Dorsolateral prefrontal cortex (tissue), 120 donors: ENCODE measurements at regions of chr20 and their contacts with region 1.

Region 1: DNA sequence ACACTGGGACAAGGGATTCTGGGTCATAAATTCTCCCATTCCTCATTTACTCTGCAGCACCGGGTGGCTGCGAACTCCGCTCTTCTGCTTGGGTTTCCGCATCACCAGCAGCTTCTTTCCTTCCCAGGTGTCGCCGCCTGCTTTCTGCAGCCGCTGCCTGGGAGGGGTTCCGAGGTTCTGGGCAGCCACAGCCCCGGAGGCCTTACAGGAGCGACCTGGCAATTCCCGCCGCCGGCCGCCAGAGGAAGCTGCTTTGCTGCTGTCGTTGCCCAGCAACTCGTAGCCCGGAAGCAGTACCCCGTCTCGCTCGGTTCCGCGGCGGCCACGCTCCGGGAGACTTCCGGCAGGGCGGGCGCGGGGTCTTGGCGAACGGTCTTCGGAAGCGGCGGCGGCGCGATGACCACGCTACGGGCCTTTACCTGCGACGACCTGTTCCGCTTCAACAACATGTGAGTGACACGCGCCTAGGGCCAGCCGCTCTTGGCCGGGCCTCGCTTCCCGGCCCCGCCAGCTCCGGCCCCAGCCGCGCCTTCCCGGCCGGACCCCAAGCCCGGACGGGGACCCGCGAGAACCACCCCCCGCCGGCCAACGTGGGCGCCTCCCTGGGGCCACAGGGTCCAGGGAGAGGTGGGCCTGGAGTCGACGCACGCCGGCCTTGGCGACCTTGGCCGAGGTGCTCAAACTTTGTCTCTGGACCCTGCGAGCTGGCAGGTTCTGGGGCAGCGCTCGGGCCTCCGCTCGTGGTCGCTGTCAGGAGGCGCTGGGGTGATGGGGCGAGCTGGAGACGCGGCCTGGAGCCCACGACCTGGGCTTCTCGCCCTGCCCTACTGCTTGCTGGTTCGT is at the start of gene NAA20:
- DNase-seq: peak; percentile 91 to 98 (median 96)
- H3K4me3 ChIP-seq: peak within 1 kb of the TSS; percentile 60 to 100 (median 97)
- H3K27ac ChIP-seq: peak within 1 kb of the TSS in 57 of 59 donors; percentile 1 to 94 (median 83)
- H3K27me3 ChIP-seq: no peaks in the 10 kb centered on the region
- CTCF ChIP-seq: peak; percentile 49 to 94 (median 82)
- total RNA-seq, gene NAA20: 28.1 to 68.2 (median 47.8) TPM

Region 2: GRCh38 chr20:20052074-20052970 is 35.1 kb after region 1 on chr20 and contains the starts of genes CFAP61 and CRNKL1:
- intact Hi-C with region 1: loop called (anchors 5 kb)
- DNase-seq: peak; percentile 95 to 98 (median 96)
- H3K4me3 ChIP-seq: peak within 1 kb of the TSS; percentile 72 to 100 (median 97)
- H3K27ac ChIP-seq: peak within 1 kb of the TSS in 57 of 59 donors; percentile 2 to 95 (median 76)
- H3K27me3 ChIP-seq: no peaks in the 10 kb centered on the region
- CTCF ChIP-seq: peak in 46 of 56 donors; percentile 10 to 67 (median 38)
- total RNA-seq, gene CFAP61: 1.8 to 18.2 (median 8.6) TPM
- total RNA-seq, gene CRNKL1: 15.3 to 37.8 (median 23.5) TPM

Region 3: DNA sequence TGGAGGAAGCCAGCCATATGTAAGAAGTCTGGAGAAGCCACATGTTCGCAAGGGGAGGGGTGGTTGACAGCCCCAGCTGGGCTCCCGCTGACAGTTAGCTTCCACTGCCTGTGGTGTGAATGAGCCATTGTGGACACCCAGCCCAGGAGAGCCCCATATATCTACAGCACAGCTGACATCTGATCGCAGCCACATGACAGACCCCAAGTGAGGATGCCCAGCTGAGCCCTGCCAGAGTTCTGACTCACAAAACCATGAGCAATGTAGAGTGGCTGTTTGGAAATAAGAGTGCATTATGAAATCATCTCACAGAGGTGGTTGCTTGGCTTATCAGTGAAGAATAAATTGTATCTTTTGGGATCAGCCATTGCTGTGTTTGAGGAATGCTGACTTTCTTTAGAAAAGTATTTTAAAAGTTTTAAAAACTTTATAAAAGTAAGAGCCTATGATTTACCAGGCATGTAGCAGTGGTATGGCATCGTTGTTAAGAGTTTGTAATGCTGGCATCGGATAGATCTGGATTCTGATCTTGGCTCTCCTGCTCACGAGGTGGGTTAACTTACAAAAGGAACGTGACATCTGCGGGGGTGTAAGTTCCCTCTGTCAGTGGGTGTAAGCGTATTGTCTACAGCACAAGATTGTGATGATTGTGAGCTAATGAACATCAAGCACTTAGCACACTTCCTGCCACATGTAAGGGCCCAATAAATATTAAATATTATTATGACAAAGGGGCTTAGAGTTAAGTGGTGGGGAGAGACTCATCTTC is 59.3 kb after region 1 on chr20:
- intact Hi-C with region 1: loop called in 1 of 2 experiments (anchors 10 kb)
- DNase-seq: peak in 9 of 10 donors; percentile 74 to 95 (median 92)
- H3K4me3 ChIP-seq: no peak overlapping the region
- H3K27ac ChIP-seq: peak overlapping the region in 4 of 59 donors; percentile 6 to 56 (median 32)
- H3K27me3 ChIP-seq: no peaks in the 10 kb centered on the region
- CTCF ChIP-seq: peak in 6 of 56 donors; percentile 11 to 38 (median 27)